ENCODE measurements at regions of chr7 and their contacts with region 1.

Region 1: DNA sequence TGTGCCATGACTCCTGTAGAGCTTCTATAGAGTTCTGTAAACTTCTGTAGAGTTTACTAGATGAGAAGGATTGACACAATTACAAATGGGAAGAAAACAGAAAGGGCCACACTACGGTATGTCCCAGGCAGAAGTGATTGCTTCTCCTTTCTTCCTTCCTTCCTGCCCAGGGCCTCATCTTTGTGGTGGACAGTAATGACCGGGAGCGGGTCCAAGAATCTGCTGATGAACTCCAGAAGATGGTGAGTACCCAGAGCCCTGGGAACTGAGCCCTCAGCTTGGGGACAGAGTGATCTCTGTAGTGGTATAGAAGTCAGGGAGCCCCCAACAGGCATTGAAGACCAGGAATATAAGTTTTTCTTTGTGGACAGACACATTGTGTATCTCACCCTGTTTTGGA is 1.7 kb downstream of the ARF5 start:
- DNase-seq: no peak
- ATAC-seq: no peak
- H3K4me3 ChIP-seq: no peak overlapping the region
- H3K4me3 Mint-ChIP-seq: peak overlapping the region; percentile 91 to 92 (median 91)
- H3K27ac ChIP-seq: no peak overlapping the region
- H3K27ac Mint-ChIP-seq: no peak overlapping the region
- H3K4me1 ChIP-seq: peaks cover 4 to 35% of the 10 kb centered on the region in 2 experiments
- H3K4me1 Mint-ChIP-seq: peaks cover 36 to 44% (median 38%) of the 10 kb centered on the region in 3 donors
- H3K27me3 ChIP-seq: no peaks in the 10 kb centered on the region
- H3K27me3 Mint-ChIP-seq: no peaks in the 10 kb centered on the region

Region 2: DNA sequence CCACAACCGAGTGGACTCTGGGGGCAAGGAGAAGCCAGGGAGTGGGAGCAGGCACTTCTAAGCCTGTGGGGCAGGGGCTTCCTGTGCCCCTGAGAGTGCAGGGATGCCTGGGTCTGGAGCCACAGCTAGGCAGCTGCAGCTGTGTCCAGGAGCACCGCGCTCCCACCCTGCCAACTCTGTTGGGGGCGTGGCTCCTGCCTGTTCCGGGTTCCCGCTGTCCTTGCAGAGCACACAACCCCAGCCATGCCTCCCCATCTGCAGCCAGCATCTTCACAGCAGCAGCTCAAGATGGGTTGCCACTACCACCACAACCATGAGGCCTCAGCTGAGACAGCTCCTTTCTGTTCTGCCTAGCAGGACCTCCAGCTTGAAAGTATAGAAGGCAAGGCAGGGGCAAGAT is 19.4 kb after region 1 on chr7:
- CTCF ChIA-PET with region 1: interaction called in 1 of 2 experiments, 12 read pairs
- POLR2A ChIA-PET with region 1: no interaction called
- DNase-seq: no peak
- ATAC-seq: no peak
- H3K4me3 ChIP-seq: no peak overlapping the region
- H3K4me3 Mint-ChIP-seq: no peak overlapping the region
- H3K27ac ChIP-seq: no peak overlapping the region
- H3K27ac Mint-ChIP-seq: no peak overlapping the region
- H3K4me1 ChIP-seq: no peaks in the 10 kb centered on the region
- H3K4me1 Mint-ChIP-seq: no peaks in the 10 kb centered on the region
- H3K27me3 ChIP-seq: peaks cover 0 to 37% of the 10 kb centered on the region in 2 experiments
- H3K27me3 Mint-ChIP-seq: peaks cover 16 to 30% of the 10 kb centered on the region in 2 donors